Left ventricle myocardium superior (tissue), 1 donor: ENCODE measurements at regions of chr6 and their contacts with region 1.

Region 1: DNA sequence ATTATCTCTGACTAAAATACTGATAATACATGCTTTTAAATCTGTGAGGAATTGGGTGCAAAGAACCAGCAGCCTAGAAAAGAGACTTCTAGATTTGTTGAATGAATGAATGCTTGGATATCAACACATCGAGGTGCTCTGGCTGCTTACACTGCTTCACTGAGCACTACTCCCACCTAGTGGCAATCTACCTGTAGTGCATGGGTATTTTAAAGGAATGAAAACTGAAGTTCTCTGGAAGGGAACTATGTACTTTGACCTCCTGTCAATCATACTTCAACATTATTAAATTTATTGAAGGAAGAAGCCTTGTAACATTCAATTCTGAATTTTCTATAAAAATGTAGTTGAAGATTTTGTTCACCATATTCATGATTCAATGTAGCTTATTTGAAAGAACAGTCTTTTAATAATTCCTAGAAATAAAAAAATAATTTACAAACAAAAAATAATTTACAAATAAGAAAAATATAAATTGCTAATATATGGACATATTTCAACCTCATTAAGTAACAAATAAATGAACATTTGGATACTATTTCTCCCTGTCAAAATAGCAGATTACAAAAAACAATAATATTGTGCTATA is 111.2 kb upstream of the MMS22L start:
- DNase-seq: no peak
- ATAC-seq: peak; percentile 33

Region 2: GRCh38 chr6:97186416-97186999 is 207.7 kb before region 1 on chr6:
- intact Hi-C with region 1: loop called (anchors 2 kb)
- DNase-seq: peak; percentile 68
- ATAC-seq: peak; percentile 50

Region 3: GRCh38 chr6:97535800-97536199 is 141.5 kb after region 1 on chr6:
- intact Hi-C with region 1: no loop called
- DNase-seq: no peak
- ATAC-seq: no peak

Region 4: DNA sequence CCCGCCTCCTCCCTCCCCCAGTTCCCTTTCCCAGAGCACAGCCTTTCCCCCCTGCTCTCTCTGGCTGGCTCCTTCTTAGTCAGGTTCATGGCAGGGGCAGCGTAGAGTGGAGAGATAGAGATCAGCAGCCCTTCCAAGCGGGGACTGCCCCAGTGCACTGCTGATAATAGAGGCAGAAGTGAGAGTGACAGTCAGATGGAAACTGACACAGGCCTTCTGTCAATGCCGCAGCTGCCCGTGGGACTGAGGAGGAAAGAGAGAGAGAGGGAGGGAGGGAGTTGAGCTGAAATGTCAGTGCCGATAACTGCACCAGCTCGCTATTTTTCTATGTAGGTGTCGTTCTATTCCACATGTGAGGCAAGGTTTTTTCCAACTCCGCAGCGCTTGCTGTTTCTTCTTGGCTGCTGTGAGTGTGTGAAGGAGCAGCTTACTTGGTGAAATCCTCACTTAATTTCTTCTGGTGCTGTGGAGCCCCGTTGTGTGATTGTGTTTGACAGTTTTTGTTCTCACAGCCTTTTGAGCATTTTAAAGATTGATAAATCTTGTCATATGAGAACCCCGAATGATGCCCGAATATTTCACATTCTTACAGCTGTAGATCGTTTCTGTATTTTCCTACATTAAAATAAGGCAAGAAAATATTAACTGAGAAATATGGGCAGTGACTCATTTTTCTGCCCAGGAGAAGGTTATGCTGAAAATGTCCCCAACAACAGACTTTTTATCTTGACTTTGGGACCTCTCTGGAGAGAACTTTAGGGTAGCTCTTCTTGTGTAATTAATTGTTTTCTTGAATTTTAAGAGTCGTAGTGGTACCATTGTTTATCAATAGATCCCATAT is 275.2 kb after region 1 on chr6:
- intact Hi-C with region 1: no loop called
- DNase-seq: peak; percentile 44
- ATAC-seq: peak; percentile 96